GM12878 (cell line): ENCODE measurements at regions of chr14 and their contacts with region 1.

Region 1: GRCh38 chr14:83096092-83096491 is 1562.4 kb upstream of the SEL1L start:
- DNase-seq: no peak
- ATAC-seq: no peak
- H3K4me3 ChIP-seq: no peak overlapping the region
- H3K27ac ChIP-seq: no peak overlapping the region
- H3K4me1 ChIP-seq: no peaks in the 10 kb centered on the region
- H3K27me3 ChIP-seq: no peaks in the 10 kb centered on the region
- CTCF ChIP-seq: no peak
- EP300 ChIP-seq: no peak
- POLR2A ChIP-seq: no peak
- RAD21 ChIP-seq: no peak

Region 2: GRCh38 chr14:83085725-83086124 is 10.4 kb before region 1 on chr14:
- CTCF ChIA-PET with region 1: no interaction called
- POLR2A ChIA-PET with region 1: no interaction called
- RAD21 ChIA-PET with region 1: no interaction called
- SMC1A ChIA-PET with region 1: no interaction called
- in situ Hi-C with region 1: no loop called
- intact Hi-C with region 1: no loop called
- DNase-seq: no peak
- ATAC-seq: peak; percentile 70
- H3K4me3 ChIP-seq: no peak overlapping the region
- H3K27ac ChIP-seq: no peak overlapping the region
- H3K4me1 ChIP-seq: no peaks in the 10 kb centered on the region
- H3K27me3 ChIP-seq: no peaks in the 10 kb centered on the region
- CTCF ChIP-seq: no peak
- EP300 ChIP-seq: no peak
- POLR2A ChIP-seq: no peak
- RAD21 ChIP-seq: no peak

Region 3: GRCh38 chr14:83163016-83163415 is 66.9 kb after region 1 on chr14:
- CTCF ChIA-PET with region 1: no interaction called
- POLR2A ChIA-PET with region 1: no interaction called
- RAD21 ChIA-PET with region 1: no interaction called
- SMC1A ChIA-PET with region 1: no interaction called
- in situ Hi-C with region 1: no loop called
- intact Hi-C with region 1: no loop called
- DNase-seq: no peak
- ATAC-seq: peak; percentile 37
- H3K4me3 ChIP-seq: no peak overlapping the region
- H3K27ac ChIP-seq: no peak overlapping the region
- H3K4me1 ChIP-seq: no peaks in the 10 kb centered on the region
- H3K27me3 ChIP-seq: no peaks in the 10 kb centered on the region
- CTCF ChIP-seq: no peak
- EP300 ChIP-seq: no peak
- POLR2A ChIP-seq: no peak
- RAD21 ChIP-seq: no peak

Region 4: DNA sequence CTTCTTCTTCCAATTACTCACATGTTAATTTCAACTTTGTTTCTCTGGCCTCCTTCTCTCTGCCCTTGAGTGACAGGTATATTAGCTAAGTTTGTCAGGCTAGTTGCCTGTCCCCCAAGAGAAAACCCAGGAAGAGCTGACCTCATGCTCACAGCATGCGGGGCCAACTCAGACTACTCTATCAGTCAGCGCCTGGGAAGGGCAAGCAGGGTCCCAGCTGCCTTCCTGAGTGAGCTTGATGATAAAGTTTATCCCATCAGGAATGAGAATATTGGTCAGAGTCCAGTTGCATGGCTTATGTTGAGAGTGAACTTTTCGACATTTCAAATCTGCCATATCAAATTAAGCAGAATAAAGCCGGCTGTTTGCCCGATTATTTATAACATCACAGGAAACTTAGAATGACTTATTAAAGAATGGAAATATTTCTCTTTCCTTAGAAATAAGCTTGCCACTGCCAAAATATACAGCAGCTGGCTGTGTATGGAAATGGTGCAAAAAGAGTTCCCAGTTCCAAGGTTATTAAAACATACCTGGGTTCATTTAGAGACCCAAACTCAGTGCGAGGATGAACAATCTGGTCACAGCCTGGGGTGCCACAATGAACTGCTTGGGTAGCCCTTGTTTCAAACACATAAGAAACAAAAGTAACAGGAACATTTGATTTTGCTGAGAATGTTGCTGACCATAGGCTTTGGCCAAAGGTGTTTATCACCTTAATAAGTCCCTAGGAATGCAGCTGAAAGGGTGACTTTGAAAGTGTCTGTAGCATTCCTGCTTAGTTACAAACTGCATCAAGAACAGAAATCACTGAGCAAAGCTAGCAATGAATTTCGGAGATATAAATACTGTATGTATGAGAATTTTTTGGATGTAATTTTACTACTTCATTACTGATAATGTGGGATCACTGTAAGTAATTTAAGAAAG is 880.0 kb after region 1 on chr14:
- CTCF ChIA-PET with region 1: no interaction called
- POLR2A ChIA-PET with region 1: no interaction called
- RAD21 ChIA-PET with region 1: no interaction called
- SMC1A ChIA-PET with region 1: no interaction called
- in situ Hi-C with region 1: no loop called
- intact Hi-C with region 1: loop called (anchors 5 kb)
- DNase-seq: no peak
- ATAC-seq: no peak
- H3K4me3 ChIP-seq: no peak overlapping the region
- H3K27ac ChIP-seq: no peak overlapping the region
- H3K4me1 ChIP-seq: no peaks in the 10 kb centered on the region
- H3K27me3 ChIP-seq: no peaks in the 10 kb centered on the region
- CTCF ChIP-seq: no peak
- EP300 ChIP-seq: no peak
- POLR2A ChIP-seq: no peak
- RAD21 ChIP-seq: no peak